ENCODE measurements at regions of chr2 and their contacts with region 1.

Region 1: GRCh38 chr2:191078165-191078867 is 64.3 kb upstream of the STAT1 start:
- DNase-seq: no peak
- ATAC-seq: no peak
- H3K4me3 ChIP-seq: no peak overlapping the region
- H3K4me3 Mint-ChIP-seq: peak overlapping the region; percentile 3 to 57 (median 29)
- H3K27ac ChIP-seq: peak overlapping the region; percentile 42
- H3K27ac Mint-ChIP-seq: peak overlapping the region; percentile 92
- H3K4me1 ChIP-seq: no peaks in the 10 kb centered on the region
- H3K4me1 Mint-ChIP-seq: peaks cover 29 to 54% (median 37%) of the 10 kb centered on the region in 3 donors
- H3K27me3 ChIP-seq: no peaks in the 10 kb centered on the region
- H3K27me3 Mint-ChIP-seq: no peaks in the 10 kb centered on the region

Region 2: GRCh38 chr2:191064590-191064989 is 13.7 kb before region 1 on chr2:
- CTCF ChIA-PET with region 1: interaction called in 1 of 2 experiments, 8 read pairs
- POLR2A ChIA-PET with region 1: interaction called, 5 to 10 read pairs
- DNase-seq: peak in 20 of 35 experiments; percentile 1 to 54 (median 14)
- ATAC-seq: peak in 3 of 4 experiments; percentile 45 to 61 (median 56)
- H3K4me3 ChIP-seq: peak overlapping the region; percentile 10 to 23
- H3K4me3 Mint-ChIP-seq: peak overlapping the region; percentile 73 to 87 (median 80)
- H3K27ac ChIP-seq: peak overlapping the region; percentile 55
- H3K27ac Mint-ChIP-seq: peak overlapping the region; percentile 98
- H3K4me1 ChIP-seq: peaks cover 34 to 55% of the 10 kb centered on the region in 2 experiments
- H3K4me1 Mint-ChIP-seq: peaks cover 76 to 85% (median 82%) of the 10 kb centered on the region in 3 donors
- H3K27me3 ChIP-seq: no peaks in the 10 kb centered on the region
- H3K27me3 Mint-ChIP-seq: no peaks in the 10 kb centered on the region

Region 3: GRCh38 chr2:191103774-191104173 is 25.5 kb after region 1 on chr2:
- CTCF ChIA-PET with region 1: no interaction called
- POLR2A ChIA-PET with region 1: interaction called in 1 of 2 experiments, 11 read pairs
- DNase-seq: no peak
- ATAC-seq: no peak
- H3K4me3 ChIP-seq: no peak overlapping the region
- H3K4me3 Mint-ChIP-seq: no peak overlapping the region
- H3K27ac ChIP-seq: no peak overlapping the region
- H3K27ac Mint-ChIP-seq: no peak overlapping the region
- H3K4me1 ChIP-seq: no peaks in the 10 kb centered on the region
- H3K4me1 Mint-ChIP-seq: peaks cover 42 to 50% (median 46%) of the 10 kb centered on the region in 3 donors
- H3K27me3 ChIP-seq: no peaks in the 10 kb centered on the region
- H3K27me3 Mint-ChIP-seq: no peaks in the 10 kb centered on the region

Region 4: DNA sequence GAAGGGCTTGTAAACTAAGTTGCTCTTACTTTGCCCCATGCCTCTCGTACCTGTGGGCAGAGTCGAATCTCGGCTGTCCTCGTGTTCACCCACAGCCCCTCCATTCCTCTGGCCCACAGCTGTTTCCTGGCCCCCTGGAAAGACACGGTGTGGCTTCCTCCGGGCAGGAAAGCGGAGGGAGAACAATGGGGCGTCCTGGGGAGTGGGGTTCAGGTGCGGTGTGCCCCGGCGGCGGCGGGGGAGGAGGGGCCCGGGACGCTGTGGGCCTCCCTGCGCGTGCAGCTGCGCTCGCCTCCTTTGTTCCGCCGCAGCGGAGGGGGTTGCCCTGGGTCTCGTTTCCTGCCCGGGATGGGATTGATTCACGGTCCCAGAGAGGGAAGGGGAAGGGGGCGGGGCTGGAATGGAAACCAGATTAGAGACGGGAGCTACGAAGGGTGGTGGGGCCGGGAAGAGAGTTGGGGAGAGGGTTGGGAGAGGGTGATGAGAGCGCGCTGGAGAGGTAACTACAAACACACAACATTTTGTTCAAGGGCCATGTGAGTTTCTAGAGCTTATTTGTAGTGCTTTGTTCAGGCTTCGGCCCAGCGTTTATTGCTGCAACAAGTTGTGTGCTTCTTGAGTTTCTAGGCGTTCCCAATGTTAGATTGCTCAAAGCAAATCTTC is 167.7 kb after region 1 on chr2:
- CTCF ChIA-PET with region 1: no interaction called
- POLR2A ChIA-PET with region 1: interaction called in 1 of 2 experiments, 13 read pairs
- DNase-seq: peak in 24 of 35 experiments; percentile 0 to 25 (median 7)
- ATAC-seq: peak; percentile 12 to 56 (median 44)
- H3K4me3 ChIP-seq: peak overlapping the region; percentile 46 to 67
- H3K4me3 Mint-ChIP-seq: peak overlapping the region; percentile 72 to 81 (median 74)
- H3K27ac ChIP-seq: no peak overlapping the region
- H3K27ac Mint-ChIP-seq: no peak overlapping the region
- H3K4me1 ChIP-seq: peaks cover 0 to 6% of the 10 kb centered on the region in 2 experiments
- H3K4me1 Mint-ChIP-seq: peaks cover 7 to 11% (median 8%) of the 10 kb centered on the region in 3 donors
- H3K27me3 ChIP-seq: peaks cover 0 to 13% of the 10 kb centered on the region in 2 experiments
- H3K27me3 Mint-ChIP-seq: peaks cover 11 to 15% of the 10 kb centered on the region in 2 donors